Dendritic cell treated with granulocyte-macrophage colony-stimulating factor and Interleukin-4, amounts not matched to agents 40 ng/mL and 50 ng/mL, for 4 days (primary cell): ENCODE measurements at regions of chr11 and their contacts with region 1.

Region 1: DNA sequence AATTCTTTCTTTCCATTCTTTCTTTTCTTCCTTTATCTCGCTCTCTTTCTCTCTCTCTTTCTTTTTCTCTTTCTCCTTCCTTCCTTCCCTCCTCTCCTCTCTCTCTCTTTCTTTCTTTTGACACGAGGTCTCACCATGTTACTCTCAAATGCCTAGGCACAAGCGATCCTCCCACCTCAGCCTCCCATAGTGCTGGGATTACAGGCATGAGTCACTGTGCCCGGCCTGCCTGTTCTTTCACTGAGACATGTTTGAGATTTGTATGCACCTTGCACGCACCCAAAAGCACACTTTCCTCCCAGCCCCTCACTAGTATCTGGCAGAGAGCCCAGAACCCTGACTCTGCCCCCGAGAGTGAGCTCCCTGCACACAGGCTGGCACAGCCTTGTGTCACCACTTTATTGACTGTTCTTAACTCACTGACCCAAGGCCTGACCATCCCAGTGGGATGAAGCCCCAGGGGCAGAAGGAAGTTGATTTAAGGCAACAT is 56.8 kb downstream of the CD6 start:
- H3K4me3 Mint-ChIP-seq: no peak overlapping the region
- H3K27ac Mint-ChIP-seq: peak overlapping the region; percentile 38
- H3K4me1 Mint-ChIP-seq: peaks cover 49% of the 10 kb centered on the region
- H3K27me3 Mint-ChIP-seq: peaks cover 43% of the 10 kb centered on the region

Region 2: GRCh38 chr11:60838132-60838531 is 190.2 kb before region 1 on chr11:
- intact Hi-C with region 1: loop called (anchors 5 kb)
- H3K4me3 Mint-ChIP-seq: no peak overlapping the region
- H3K27ac Mint-ChIP-seq: peak overlapping the region; percentile 1
- H3K4me1 Mint-ChIP-seq: peaks cover 75% of the 10 kb centered on the region
- H3K27me3 Mint-ChIP-seq: peaks cover 5% of the 10 kb centered on the region